GM18951 (cell line): ENCODE measurements at regions of chr3 and their contacts with region 1.

Region 1: GRCh38 chr3:141192345-141192744 is 39.3 kb upstream of the PXYLP1 start:
- POLR2A ChIP-seq: no peak

Region 2: GRCh38 chr3:141000027-141000663 is 192.2 kb before region 1 on chr3:
- in situ Hi-C with region 1: loop called (anchors 10 kb)
- POLR2A ChIP-seq: no peak

Region 3: DNA sequence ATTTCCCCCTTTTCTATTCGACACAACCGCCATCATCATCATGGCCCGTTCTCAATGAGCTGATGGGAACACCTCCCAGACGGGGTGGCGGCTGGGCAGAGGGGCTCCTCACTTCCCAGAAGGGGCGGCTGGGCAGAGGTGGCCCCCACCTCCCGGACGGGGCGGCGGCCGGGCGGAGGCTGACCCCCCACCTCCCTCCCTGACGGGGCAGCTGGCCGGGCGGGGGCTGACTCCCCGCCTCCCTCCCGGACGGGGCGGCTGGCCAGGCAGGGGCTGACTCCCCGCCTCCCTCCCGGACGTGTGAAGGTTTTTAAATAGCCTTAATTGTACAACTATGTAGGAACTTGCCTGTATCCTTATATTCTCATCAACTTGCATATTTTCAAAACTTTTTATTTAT is 162.0 kb before region 1 on chr3:
- in situ Hi-C with region 1: no loop called
- POLR2A ChIP-seq: no peak